ENCODE measurements at regions of chr14 and their contacts with region 1.

Region 1: GRCh38 chr14:86462193-86462753 is 932.3 kb downstream of the FLRT2 start:
- DNase-seq: no peak
- ATAC-seq: peak; percentile 80 to 89 (median 82)
- H3K4me3 ChIP-seq: no peak overlapping the region
- H3K27ac ChIP-seq: no peak overlapping the region
- H3K4me1 ChIP-seq: no peaks in the 10 kb centered on the region
- H3K27me3 ChIP-seq: no peaks in the 10 kb centered on the region
- CTCF ChIP-seq: peak; percentile 49 to 65 (median 58)
- POLR2A ChIP-seq: no peak

Region 2: DNA sequence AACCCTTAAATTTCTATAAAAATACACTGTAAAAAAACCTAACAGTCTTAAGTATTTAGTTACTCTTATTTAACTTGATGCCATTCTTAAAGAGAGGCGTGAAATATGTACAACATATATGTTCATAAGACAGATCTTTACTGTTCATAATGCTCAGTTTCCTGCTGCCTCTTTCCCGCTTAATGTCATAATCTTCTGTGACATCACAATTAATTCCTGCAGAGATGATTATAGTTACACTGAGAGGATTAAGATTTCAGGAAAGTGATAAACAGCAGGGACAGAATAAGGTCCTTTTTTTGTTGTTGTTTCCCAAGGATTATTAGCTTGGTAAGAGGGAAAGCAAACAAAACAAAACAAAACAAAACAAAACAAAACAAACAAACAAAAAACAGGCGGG is 130.9 kb before region 1 on chr14:
- intact Hi-C with region 1: no loop called
- DNase-seq: no peak
- ATAC-seq: no peak
- H3K4me3 ChIP-seq: no peak overlapping the region
- H3K27ac ChIP-seq: no peak overlapping the region
- H3K4me1 ChIP-seq: no peaks in the 10 kb centered on the region
- H3K27me3 ChIP-seq: no peaks in the 10 kb centered on the region
- CTCF ChIP-seq: no peak
- POLR2A ChIP-seq: no peak

Region 3: DNA sequence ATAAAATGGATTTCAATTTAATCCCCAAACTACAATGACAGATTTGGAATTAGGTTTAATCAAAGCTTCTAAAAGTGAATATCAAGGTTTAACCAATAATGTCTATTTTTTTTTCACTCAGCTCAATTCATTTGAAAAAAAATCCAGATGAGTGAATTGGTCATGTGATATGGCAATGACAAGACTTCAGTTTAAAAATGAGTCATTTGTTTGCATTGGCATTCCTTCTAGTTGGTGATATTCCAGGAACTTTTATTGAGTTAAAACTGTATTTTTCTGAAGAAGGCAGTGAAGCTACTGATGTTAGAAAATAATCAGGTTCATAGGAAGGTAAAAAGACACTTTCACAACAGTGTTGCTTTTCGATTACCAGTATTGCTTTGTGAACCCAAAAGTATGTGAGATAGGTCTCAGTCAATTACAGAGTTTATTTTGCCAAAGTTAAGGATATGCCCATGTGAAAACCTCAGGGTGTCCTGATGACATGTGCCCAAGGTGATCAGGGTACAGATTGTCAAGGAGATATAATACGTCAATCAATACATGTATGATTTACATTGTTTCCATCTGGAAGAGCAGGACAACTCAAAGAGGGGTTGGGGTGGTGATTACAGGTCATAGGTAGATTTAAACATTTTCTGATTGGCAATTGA is 315.8 kb after region 1 on chr14:
- intact Hi-C with region 1: no loop called
- DNase-seq: no peak
- ATAC-seq: peak; percentile 56 to 75 (median 64)
- H3K4me3 ChIP-seq: no peak overlapping the region
- H3K27ac ChIP-seq: peak overlapping the region; percentile 3 to 46 (median 5)
- H3K4me1 ChIP-seq: peaks cover 0 to 25% (median 9%) of the 10 kb centered on the region in 4 donors
- H3K27me3 ChIP-seq: no peaks in the 10 kb centered on the region
- CTCF ChIP-seq: no peak
- POLR2A ChIP-seq: no peak

Region 4: GRCh38 chr14:86915406-86915805 is 453.1 kb after region 1 on chr14:
- intact Hi-C with region 1: loop called in 1 of 2 experiments (anchors 10 kb)
- DNase-seq: no peak
- ATAC-seq: no peak
- H3K4me3 ChIP-seq: no peak overlapping the region
- H3K27ac ChIP-seq: no peak overlapping the region
- H3K4me1 ChIP-seq: no peaks in the 10 kb centered on the region
- H3K27me3 ChIP-seq: no peaks in the 10 kb centered on the region
- CTCF ChIP-seq: no peak
- POLR2A ChIP-seq: no peak